H1 (cell line): ENCODE measurements at regions of chr11 and their contacts with region 1.

Region 1: DNA sequence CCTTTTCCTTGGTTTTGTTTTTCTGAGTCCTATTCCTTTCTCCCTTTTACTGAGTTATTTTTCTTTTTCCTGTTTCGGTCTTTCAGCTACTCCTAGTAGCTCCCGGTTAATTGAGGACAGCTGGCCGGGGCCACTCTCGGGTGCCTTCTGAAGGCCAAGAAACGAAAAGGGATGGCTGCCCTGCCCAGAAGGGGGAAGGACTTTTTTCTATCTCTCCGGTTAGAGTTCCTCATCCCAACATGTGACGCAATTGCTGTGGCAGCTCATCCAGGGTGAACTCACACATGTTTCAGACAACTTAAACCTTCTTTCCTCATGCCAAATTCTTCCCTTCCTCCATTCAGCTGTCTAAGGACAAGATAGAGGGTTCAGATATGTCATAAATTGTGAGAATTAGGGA is 83.6 kb downstream of the PIWIL4 start:
- DNase-seq: no peak
- H3K4me3 ChIP-seq: peak overlapping the region; percentile 12 to 62 (median 32); a peak in 7 of 8 replicates
- H3K27ac ChIP-seq: peak overlapping the region; percentile 70
- H3K4me1 ChIP-seq: peaks cover 5 to 32% (median 17%) of the 10 kb centered on the region in 4 experiments; a peak in 6 of 7 replicates
- H3K27me3 ChIP-seq: no peaks in the 10 kb centered on the region
- CTCF ChIP-seq: no peak
- EP300 ChIP-seq: no peak
- POLR2A ChIP-seq: no peak; a peak in 1 of 3 replicates
- RAD21 ChIP-seq: no peak

Region 2: DNA sequence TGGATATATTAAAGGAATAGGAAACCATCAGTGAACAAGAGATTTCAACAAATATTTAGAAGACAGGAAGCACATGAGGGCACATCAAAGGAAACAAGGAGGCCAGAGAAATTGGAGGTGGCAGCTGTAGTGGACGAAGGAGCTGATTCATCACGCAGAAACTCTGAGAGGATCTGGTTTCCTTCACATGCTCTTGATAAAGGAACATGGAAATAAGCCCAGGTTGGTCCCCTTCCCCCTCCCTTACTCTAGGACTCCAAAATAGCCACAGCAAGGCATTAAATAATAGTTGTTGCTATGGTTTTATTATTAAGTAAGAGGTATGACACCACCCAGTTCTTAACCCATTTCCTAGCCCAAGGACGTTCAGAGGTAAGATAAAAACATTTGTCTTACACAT is 335.1 kb before region 1 on chr11:
- CTCF ChIA-PET with region 1: no interaction called
- POLR2A ChIA-PET with region 1: no interaction called
- DNase-seq: no peak
- H3K4me3 ChIP-seq: no peak overlapping the region
- H3K27ac ChIP-seq: no peak overlapping the region
- H3K4me1 ChIP-seq: no peaks in the 10 kb centered on the region
- H3K27me3 ChIP-seq: no peaks in the 10 kb centered on the region
- CTCF ChIP-seq: no peak
- EP300 ChIP-seq: no peak
- POLR2A ChIP-seq: no peak
- RAD21 ChIP-seq: no peak

Region 3: GRCh38 chr11:94638902-94639373 is 11.8 kb before region 1 on chr11:
- CTCF ChIA-PET with region 1: no interaction called
- POLR2A ChIA-PET with region 1: interaction called, 44 read pairs
- DNase-seq: peak in 1 of 2 experiments; percentile 17
- H3K4me3 ChIP-seq: no peak overlapping the region
- H3K27ac ChIP-seq: no peak overlapping the region
- H3K4me1 ChIP-seq: no peaks in the 10 kb centered on the region; a peak in 1 of 7 replicates
- H3K27me3 ChIP-seq: no peaks in the 10 kb centered on the region
- CTCF ChIP-seq: no peak
- EP300 ChIP-seq: no peak
- POLR2A ChIP-seq: no peak
- RAD21 ChIP-seq: no peak

Region 4: GRCh38 chr11:94664346-94664745 is 13.6 kb after region 1 on chr11:
- CTCF ChIA-PET with region 1: interaction called, 5 read pairs
- POLR2A ChIA-PET with region 1: interaction called, 167 read pairs
- DNase-seq: no peak
- H3K4me3 ChIP-seq: no peak overlapping the region
- H3K27ac ChIP-seq: no peak overlapping the region
- H3K4me1 ChIP-seq: peaks cover 0 to 10% (median 1%) of the 10 kb centered on the region in 4 experiments; a peak in 3 of 7 replicates
- H3K27me3 ChIP-seq: no peaks in the 10 kb centered on the region
- CTCF ChIP-seq: no peak
- EP300 ChIP-seq: no peak
- POLR2A ChIP-seq: no peak
- RAD21 ChIP-seq: no peak

Region 5: GRCh38 chr11:94673951-94674491 is 23.3 kb after region 1 on chr11:
- CTCF ChIA-PET with region 1: interaction called, 6 read pairs
- POLR2A ChIA-PET with region 1: interaction called, 167 read pairs
- DNase-seq: peak in 1 of 2 experiments; percentile 37
- H3K4me3 ChIP-seq: no peak overlapping the region
- H3K27ac ChIP-seq: no peak overlapping the region
- H3K4me1 ChIP-seq: peaks cover 0 to 7% (median 0%) of the 10 kb centered on the region in 4 experiments; a peak in 1 of 7 replicates
- H3K27me3 ChIP-seq: no peaks in the 10 kb centered on the region
- CTCF ChIP-seq: no peak
- EP300 ChIP-seq: no peak
- POLR2A ChIP-seq: no peak
- RAD21 ChIP-seq: no peak

Region 6: DNA sequence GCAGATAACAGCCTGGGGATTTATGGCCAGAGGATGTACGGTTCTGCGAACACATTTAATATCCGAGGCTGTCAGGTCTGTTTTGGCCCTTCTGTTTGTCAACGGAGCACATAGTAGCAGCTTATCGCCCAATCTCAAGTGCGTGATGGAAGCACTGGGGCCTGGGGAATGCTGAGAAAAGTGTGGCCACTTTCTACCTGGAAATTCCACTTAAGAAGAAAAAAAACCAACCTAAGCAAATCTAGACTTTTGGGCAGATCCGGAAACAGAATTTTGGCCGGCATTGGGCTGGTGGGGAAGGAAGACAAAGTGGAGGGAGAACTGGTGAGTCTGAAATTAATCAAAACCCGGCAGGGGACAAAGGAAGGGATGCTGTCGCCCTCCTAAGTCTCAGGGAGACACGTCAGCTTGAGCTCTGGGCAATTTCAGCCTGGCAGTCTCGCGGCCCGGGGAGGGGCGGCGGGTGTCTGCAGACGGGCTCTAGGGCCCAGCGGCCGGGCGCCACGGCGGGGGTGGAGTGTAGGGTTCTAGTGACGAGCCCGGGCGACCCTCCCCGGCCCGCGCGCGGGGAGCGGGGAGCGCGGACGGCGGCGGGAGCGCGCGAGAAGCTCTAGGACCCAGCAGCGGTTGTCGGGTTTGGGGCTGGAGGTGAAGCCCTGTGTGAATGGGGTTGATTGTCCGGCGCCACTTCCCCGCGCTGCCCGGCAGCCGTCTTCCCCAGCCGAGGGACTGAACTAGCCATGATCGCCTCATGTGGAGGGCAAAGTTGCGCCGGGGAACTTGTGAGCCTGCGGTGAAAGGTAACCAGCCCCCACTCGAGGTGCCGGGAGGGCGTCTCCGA is 117.2 kb after region 1 on chr11 and contains the start of gene AMOTL1:
- CTCF ChIA-PET with region 1: interaction called, 3 read pairs
- POLR2A ChIA-PET with region 1: interaction called, 14 read pairs
- DNase-seq: peak; percentile 61 to 90
- H3K4me3 ChIP-seq: peak within 1 kb of the TSS; percentile 75 to 94 (median 78)
- H3K27ac ChIP-seq: no peak within 1 kb of the TSS
- H3K4me1 ChIP-seq: peaks cover 0 to 24% (median 17%) of the 10 kb centered on the region in 4 experiments
- H3K27me3 ChIP-seq: peaks cover 8 to 51% (median 43%) of the 10 kb centered on the region in 4 experiments
- CTCF ChIP-seq: no peak; a peak in 1 of 4 replicates
- EP300 ChIP-seq: peak in 1 of 2 experiments; percentile 42; a peak in 1 of 3 replicates
- POLR2A ChIP-seq: no peak; a peak in 1 of 3 replicates
- RAD21 ChIP-seq: peak; percentile 30 to 48; a peak in 2 of 4 replicates
- total RNA-seq, gene AMOTL1: 27.6 and 31.6 TPM in 2 replicates